Breast epithelium (tissue), 4 donors: ENCODE measurements at regions of chr9 and their contacts with region 1.

Region 1: GRCh38 chr9:77569173-77569734 is 78.9 kb downstream of the GNA14 start:
- DNase-seq: no peak
- H3K4me3 ChIP-seq: no peak overlapping the region
- H3K27ac ChIP-seq: no peak overlapping the region
- H3K4me1 ChIP-seq: no peaks in the 10 kb centered on the region
- H3K27me3 ChIP-seq: no peaks in the 10 kb centered on the region
- CTCF ChIP-seq: no peak
- POLR2A ChIP-seq: no peak

Region 2: DNA sequence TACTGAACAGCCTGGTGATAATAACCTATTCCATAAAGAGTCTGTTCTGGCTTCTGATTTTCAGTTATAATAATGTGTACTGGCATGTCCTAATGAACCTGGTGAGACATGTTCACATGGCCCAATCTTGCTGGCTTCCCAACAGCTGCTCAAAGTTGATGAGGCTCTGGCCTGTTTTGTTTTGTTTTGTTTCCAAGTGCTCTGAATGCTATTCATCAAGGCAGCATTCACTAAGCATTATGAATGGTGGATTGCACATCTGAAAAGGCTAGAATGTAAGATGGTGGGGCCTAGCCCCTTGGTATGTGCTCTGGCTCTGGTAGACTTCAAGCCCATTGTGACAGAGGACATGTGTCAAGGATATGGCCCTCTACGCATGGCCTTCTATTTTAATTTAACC is 1116.2 kb after region 1 on chr9:
- intact Hi-C with region 1: loop called (anchors 10 kb)
- DNase-seq: no peak
- H3K4me3 ChIP-seq: no peak overlapping the region
- H3K27ac ChIP-seq: no peak overlapping the region
- H3K4me1 ChIP-seq: no peaks in the 10 kb centered on the region
- H3K27me3 ChIP-seq: no peaks in the 10 kb centered on the region
- CTCF ChIP-seq: no peak
- POLR2A ChIP-seq: no peak